ENCODE measurements at regions of chr1 and their contacts with region 1.

Region 1: DNA sequence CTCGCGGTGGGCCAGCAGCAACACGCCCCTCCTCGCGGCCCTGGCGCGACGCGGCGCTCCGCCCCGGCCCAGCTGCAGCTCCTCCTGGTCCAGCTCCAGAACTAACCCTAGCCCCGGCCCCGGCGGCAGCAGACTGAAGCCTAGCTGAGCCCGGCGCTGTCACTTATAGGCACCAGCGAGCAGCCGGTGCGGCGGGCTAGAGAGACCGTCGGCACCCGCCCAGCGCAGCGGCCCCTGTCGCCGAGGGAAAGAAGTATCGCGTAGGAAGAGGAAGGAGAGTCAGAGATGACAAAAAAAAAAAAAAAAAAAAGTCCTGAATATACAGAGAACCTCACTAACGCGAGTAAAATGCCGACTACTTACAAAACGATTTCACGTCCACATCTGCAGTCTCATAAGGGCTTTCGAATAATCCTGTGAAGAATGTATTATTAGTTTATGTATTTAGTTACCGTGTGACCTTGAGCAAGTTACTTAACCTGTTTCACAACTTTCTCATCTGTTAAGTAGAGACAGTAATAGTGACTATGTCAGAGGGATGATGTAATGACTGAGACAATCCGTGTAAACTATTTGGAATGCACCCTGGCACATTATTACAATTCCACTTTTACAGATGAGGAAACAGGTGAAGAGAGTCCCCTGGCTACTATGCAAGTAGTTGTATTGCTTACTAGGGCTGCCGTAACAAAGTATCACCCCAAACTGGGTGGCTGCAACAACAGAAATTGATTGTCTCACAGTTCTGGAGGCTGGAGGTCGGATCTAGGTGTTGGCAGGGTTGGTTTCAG is at the start of gene SLC9A1:
- DNase-seq: peak; percentile 82 to 97
- H3K4me3 ChIP-seq: peak within 1 kb of the TSS; percentile 72 to 82
- H3K27ac ChIP-seq: peak within 1 kb of the TSS; percentile 80 to 89
- H3K4me1 ChIP-seq: peaks cover 22 to 26% of the 10 kb centered on the region in 2 donors
- H3K27me3 ChIP-seq: no peaks in the 10 kb centered on the region
- CTCF ChIP-seq: peak; percentile 74 to 85 (median 82)
- total RNA-seq, gene SLC9A1: 22.0 TPM

Region 2: DNA sequence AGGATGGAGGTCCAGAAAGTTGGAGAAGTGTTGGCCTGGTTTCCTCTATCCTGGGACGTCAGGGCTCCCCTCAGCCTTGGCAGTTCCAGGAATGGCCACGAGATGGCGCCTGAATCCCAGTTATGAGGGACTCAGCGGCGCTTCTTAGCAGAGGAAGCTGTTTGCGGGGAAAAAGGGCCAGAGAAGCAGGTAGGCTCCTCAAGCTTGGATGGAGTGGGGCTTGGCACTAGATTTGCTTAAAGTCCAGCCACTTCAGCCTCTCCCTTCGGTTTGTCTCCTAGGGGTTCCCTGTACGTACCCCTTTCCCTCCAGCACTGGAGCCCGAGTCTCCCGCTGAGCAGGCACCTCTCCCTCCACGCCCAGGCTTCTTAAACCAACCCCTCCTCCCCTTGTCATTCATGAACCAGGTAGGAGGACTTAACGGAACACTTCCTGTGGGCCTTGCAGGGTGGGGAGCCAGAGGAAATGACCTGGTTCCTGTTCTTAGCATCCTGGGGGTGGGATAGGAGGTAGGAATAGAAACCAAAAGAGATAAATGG is 110.5 kb before region 1 on chr1:
- intact Hi-C with region 1: loop called (anchors 5 kb)
- DNase-seq: peak; percentile 43 to 94
- H3K4me3 ChIP-seq: peak overlapping the region; percentile 24 to 43
- H3K27ac ChIP-seq: no peak overlapping the region
- H3K4me1 ChIP-seq: peaks cover 5 to 7% of the 10 kb centered on the region in 2 donors
- H3K27me3 ChIP-seq: no peaks in the 10 kb centered on the region
- CTCF ChIP-seq: peak; percentile 94 to 98 (median 95)

Region 3: DNA sequence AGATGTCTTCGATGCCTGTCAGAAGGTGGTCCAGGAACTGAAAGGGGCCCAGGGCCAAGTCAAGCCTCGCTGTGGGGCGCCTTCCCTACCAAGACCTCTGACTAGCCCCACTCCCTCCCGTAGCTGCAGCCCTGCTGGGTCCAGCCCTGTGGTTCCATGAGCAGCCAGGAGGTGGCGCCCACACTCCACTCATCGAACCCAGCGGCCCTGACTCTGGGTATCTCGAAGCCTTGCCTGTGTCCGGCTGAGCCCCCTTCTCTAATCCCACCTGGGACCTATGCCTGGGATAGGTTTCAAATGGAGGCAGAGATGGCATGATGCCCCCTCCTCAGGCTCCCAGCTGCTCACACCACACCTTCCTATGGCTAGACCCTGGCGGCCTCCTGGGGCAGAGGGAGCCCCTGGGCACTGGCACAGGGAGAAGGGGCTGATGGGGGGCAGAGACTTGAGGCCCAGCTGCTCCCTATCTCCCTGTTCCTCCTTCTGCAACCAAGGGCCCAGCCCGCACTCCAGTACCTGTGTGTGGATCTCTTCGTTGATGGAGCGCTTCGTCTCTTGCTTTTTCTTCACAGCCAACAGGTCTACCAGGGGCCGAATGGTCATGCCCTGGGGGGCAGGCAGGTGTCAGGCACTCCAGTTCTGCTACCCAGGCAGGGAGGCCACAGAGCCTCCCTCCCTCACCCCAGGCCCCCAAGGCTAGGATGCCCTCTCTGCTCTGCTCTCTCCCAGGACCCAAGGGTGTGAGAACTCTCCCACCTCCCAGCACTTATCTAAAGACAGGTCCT is 52.3 kb before region 1 on chr1:
- intact Hi-C with region 1: loop called (anchors 2 kb)
- DNase-seq: peak in 1 of 2 donors; percentile 86
- H3K4me3 ChIP-seq: no peak overlapping the region
- H3K27ac ChIP-seq: no peak overlapping the region
- H3K4me1 ChIP-seq: peaks cover 16 to 22% of the 10 kb centered on the region in 2 donors
- H3K27me3 ChIP-seq: no peaks in the 10 kb centered on the region
- CTCF ChIP-seq: peak; percentile 97 to 99 (median 98)

Region 4: GRCh38 chr1:27111626-27112573 is 43.3 kb before region 1 on chr1:
- intact Hi-C with region 1: loop called (anchors 1 kb)
- DNase-seq: peak; percentile 87 to 94
- H3K4me3 ChIP-seq: no peak overlapping the region
- H3K27ac ChIP-seq: peak overlapping the region; percentile 60 to 67
- H3K4me1 ChIP-seq: peaks cover 4 to 23% of the 10 kb centered on the region in 2 donors
- H3K27me3 ChIP-seq: no peaks in the 10 kb centered on the region
- CTCF ChIP-seq: peak in 2 of 3 experiments; percentile 9 to 31

Region 5: DNA sequence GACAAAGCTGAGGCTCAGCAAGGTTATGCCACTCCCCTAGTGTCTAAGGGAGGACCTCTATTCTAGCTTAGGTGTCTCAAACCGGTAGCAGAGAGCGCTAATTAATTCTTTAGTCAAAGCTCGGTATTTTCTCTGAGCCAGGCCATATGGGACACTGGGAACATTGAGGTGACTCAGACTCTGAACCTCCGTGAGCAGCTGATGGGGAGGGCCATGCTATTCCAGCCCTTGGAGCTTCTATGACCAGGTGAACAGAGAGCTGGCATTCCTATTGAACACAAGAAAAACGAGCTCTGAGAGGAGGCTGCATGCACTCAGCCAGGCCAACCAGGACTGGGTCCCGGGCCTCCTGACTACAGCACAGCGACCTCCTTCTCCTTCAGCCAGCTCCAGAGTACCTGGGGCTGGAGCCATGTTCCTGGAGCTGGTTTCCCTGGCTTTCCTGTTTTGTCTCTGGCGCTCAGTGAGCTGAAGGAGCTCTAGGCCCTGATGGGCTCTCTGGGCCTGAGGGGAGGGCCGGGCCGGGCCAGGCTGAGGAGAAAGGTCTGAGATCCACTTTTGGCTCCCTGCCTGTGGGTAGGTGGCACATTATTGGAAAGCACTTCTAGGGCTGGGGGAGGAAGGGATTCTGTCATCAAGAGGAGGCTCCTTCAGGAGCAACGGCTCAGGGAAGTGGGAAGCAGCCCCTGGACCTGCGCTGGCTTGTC is 37.3 kb before region 1 on chr1:
- intact Hi-C with region 1: loop called (anchors 2 kb)
- DNase-seq: no peak
- H3K4me3 ChIP-seq: no peak overlapping the region
- H3K27ac ChIP-seq: peak overlapping the region; percentile 83 to 87
- H3K4me1 ChIP-seq: peaks cover 25 to 56% of the 10 kb centered on the region in 2 donors
- H3K27me3 ChIP-seq: no peaks in the 10 kb centered on the region
- CTCF ChIP-seq: no peak

Measured in ascending aorta (tissue), 2 donors.